ENCODE measurements at regions of chr17 and their contacts with region 1.

Region 1: GRCh38 chr17:29148790-29149430 is 31.3 kb downstream of the MYO18A start:
- DNase-seq: peak; percentile 79
- ATAC-seq: peak; percentile 90
- H3K4me3 ChIP-seq: peak overlapping the region; percentile 59
- H3K27ac ChIP-seq: peak overlapping the region; percentile 73
- H3K4me1 ChIP-seq: peaks cover 31% of the 10 kb centered on the region
- H3K27me3 ChIP-seq: no peaks in the 10 kb centered on the region
- CTCF ChIP-seq: peak; percentile 91 to 98 (median 97)
- EP300 ChIP-seq: no peak
- POLR2A ChIP-seq: peak; percentile 88
- RAD21 ChIP-seq: peak; percentile 88

Region 2: GRCh38 chr17:28878981-28879380 is 269.9 kb before region 1 on chr17:
- CTCF ChIA-PET with region 1: no interaction called
- POLR2A ChIA-PET with region 1: no interaction called
- RAD21 ChIA-PET with region 1: no interaction called
- SMC1A ChIA-PET with region 1: no interaction called
- in situ Hi-C with region 1: no loop called
- intact Hi-C with region 1: no loop called
- DNase-seq: no peak
- ATAC-seq: peak; percentile 92
- H3K4me3 ChIP-seq: no peak overlapping the region
- H3K27ac ChIP-seq: no peak overlapping the region
- H3K4me1 ChIP-seq: no peaks in the 10 kb centered on the region; the same call in 1 of the 2 replicates
- H3K27me3 ChIP-seq: no peaks in the 10 kb centered on the region
- CTCF ChIP-seq: peak; percentile 52 to 67 (median 55); a peak in 5 of 6 replicates
- EP300 ChIP-seq: no peak
- POLR2A ChIP-seq: no peak
- RAD21 ChIP-seq: peak; percentile 77

Region 3: DNA sequence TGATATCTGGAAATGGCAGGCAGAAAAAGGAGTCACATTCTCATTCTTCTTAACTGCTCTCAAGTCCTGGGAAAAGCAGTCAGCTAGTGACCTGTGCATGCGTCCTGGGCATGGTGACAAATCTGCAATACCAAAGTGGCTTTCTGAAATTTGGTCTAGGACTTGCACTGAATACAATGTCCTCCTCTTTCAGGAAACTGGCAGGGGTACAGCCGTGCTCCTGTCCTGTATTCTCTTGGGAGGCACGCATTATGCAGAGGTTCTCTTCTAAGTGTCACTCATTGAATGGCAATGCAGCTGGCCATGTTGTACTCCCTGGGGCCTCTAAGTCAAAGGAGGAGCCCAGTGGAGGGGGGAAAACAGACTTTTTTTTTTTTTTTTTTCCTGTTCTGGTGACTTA is 208.2 kb before region 1 on chr17:
- CTCF ChIA-PET with region 1: no interaction called
- POLR2A ChIA-PET with region 1: no interaction called
- RAD21 ChIA-PET with region 1: no interaction called
- SMC1A ChIA-PET with region 1: no interaction called
- in situ Hi-C with region 1: no loop called
- intact Hi-C with region 1: no loop called
- DNase-seq: no peak
- ATAC-seq: no peak
- H3K4me3 ChIP-seq: no peak overlapping the region
- H3K27ac ChIP-seq: no peak overlapping the region
- H3K4me1 ChIP-seq: peaks cover 13% of the 10 kb centered on the region
- H3K27me3 ChIP-seq: no peaks in the 10 kb centered on the region
- CTCF ChIP-seq: no peak
- EP300 ChIP-seq: no peak
- POLR2A ChIP-seq: no peak
- RAD21 ChIP-seq: no peak

Region 4: DNA sequence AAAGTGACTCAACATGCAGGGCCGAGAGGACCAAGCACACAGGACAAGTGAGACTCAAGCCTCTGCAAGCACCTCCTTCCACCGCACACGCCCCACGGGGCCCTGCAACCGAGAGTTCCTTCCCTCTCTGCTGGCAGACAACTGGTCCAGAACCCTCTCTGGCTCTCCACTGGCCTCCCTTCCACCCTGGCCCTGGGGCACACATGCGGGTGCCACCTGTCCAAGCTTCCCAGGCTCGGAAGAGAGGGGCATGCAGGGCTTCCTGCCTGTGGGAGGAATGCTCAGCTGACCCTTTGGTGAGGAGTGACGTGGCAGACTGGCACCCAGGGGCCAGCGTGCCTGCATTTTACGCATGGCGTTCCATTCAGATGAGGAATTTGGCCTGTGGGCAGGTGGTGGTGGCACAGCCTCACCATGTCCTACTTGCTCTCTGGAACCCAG is 46.1 kb before region 1 on chr17:
- CTCF ChIA-PET with region 1: no interaction called
- POLR2A ChIA-PET with region 1: no interaction called
- RAD21 ChIA-PET with region 1: no interaction called
- SMC1A ChIA-PET with region 1: no interaction called
- in situ Hi-C with region 1: no loop called
- intact Hi-C with region 1: no loop called
- DNase-seq: no peak
- ATAC-seq: no peak
- H3K4me3 ChIP-seq: no peak overlapping the region
- H3K27ac ChIP-seq: no peak overlapping the region
- H3K4me1 ChIP-seq: no peaks in the 10 kb centered on the region
- H3K27me3 ChIP-seq: no peaks in the 10 kb centered on the region
- CTCF ChIP-seq: no peak
- EP300 ChIP-seq: no peak
- POLR2A ChIP-seq: no peak
- RAD21 ChIP-seq: no peak

Region 5: GRCh38 chr17:29116804-29117772 is 31.8 kb before region 1 on chr17:
- CTCF ChIA-PET with region 1: interaction called, 371 read pairs
- POLR2A ChIA-PET with region 1: no interaction called
- RAD21 ChIA-PET with region 1: interaction called, 7 read pairs
- SMC1A ChIA-PET with region 1: interaction called, 4 read pairs
- in situ Hi-C with region 1: no loop called
- intact Hi-C with region 1: no loop called
- DNase-seq: peak; percentile 5
- ATAC-seq: peak; percentile 89
- H3K4me3 ChIP-seq: no peak overlapping the region
- H3K27ac ChIP-seq: no peak overlapping the region
- H3K4me1 ChIP-seq: no peaks in the 10 kb centered on the region
- H3K27me3 ChIP-seq: no peaks in the 10 kb centered on the region
- CTCF ChIP-seq: peak; percentile 90 to 95 (median 92)
- EP300 ChIP-seq: no peak
- POLR2A ChIP-seq: no peak
- RAD21 ChIP-seq: peak; percentile 70

Region 6: DNA sequence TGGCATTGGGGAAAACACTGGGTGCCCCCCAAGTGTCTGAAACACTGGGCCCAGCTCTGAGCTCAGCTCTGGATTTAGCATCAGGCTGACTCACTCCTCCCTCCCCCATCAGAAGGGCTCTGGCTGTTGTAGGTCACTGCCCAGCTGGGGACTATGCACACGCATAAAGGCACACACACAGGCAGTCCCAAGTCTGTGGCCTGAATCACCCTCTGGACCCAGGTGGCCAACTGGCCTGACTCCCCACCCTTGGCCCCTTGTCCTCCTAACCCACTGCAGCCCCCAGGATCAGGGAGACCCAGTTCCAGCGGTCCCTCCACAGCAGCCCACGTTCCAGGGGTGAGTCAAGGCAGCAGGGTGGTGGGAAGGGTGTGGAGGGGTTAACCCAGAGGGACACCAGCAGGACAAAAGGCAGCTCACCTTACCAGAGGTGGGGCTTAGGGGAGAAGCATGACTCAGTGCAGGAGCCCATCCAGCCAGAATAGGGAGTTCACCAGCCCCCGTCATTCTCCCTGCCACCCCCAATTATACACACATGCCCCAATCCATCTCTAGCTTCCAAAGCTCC is 15.7 kb before region 1 on chr17:
- CTCF ChIA-PET with region 1: interaction called, 371 read pairs
- POLR2A ChIA-PET with region 1: interaction called, 3 read pairs
- RAD21 ChIA-PET with region 1: interaction called, 49 read pairs
- SMC1A ChIA-PET with region 1: interaction called, 42 read pairs
- in situ Hi-C with region 1: no loop called
- intact Hi-C with region 1: no loop called
- DNase-seq: no peak
- ATAC-seq: peak; percentile 35; the same call in 1 of the 3 replicates
- H3K4me3 ChIP-seq: no peak overlapping the region
- H3K27ac ChIP-seq: no peak overlapping the region
- H3K4me1 ChIP-seq: peaks cover 7% of the 10 kb centered on the region
- H3K27me3 ChIP-seq: no peaks in the 10 kb centered on the region
- CTCF ChIP-seq: no peak
- EP300 ChIP-seq: no peak
- POLR2A ChIP-seq: no peak
- RAD21 ChIP-seq: no peak

Region 7: DNA sequence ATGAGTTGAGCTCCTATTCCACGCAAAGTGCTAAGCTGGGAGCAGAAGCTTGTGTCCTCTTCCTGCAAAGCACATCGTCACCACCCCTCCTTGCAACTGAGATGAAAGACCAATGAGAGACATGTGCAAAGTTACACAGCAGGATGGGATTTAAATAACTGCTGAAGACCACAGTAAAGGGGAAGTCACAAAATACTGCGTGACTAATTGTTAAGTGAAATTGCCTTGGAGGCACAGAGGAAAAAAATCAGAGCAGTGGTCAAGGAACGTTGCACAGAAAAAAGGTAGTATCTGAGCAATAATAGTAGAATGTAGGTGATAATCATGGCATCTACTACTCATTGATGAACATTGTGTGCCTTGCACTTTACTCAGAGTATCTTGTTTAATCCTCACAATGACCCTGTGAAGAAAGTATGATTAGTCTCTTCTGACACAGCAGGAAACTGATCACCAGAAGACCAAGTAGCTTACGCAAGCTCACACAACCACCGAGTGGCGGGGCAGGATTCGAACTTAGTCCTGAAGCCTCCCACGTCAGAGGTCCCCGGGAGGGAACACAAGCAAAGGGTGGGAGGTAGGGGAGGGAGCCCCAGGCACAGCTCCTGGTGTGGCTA is 46.7 kb after region 1 on chr17:
- CTCF ChIA-PET with region 1: interaction called, 14 read pairs
- POLR2A ChIA-PET with region 1: interaction called, 6 read pairs
- RAD21 ChIA-PET with region 1: interaction called, 3 read pairs
- SMC1A ChIA-PET with region 1: interaction called, 6 read pairs
- in situ Hi-C with region 1: no loop called
- intact Hi-C with region 1: no loop called
- DNase-seq: no peak
- ATAC-seq: peak; percentile 88
- H3K4me3 ChIP-seq: 0 out of 2 replicates have a peak overlapping the region, but pooled peaks have one; percentile 5
- H3K27ac ChIP-seq: peak overlapping the region; percentile 15; the same call in 1 of the 2 replicates
- H3K4me1 ChIP-seq: peaks cover 15% of the 10 kb centered on the region
- H3K27me3 ChIP-seq: no peaks in the 10 kb centered on the region
- CTCF ChIP-seq: no peak
- EP300 ChIP-seq: no peak; a peak in 1 of 4 replicates
- POLR2A ChIP-seq: no peak
- RAD21 ChIP-seq: no peak

Region 8: GRCh38 chr17:29241015-29241963 is 92.4 kb after region 1 on chr17:
- CTCF ChIA-PET with region 1: interaction called, 21 read pairs
- POLR2A ChIA-PET with region 1: no interaction called
- RAD21 ChIA-PET with region 1: interaction called, 14 read pairs
- SMC1A ChIA-PET with region 1: interaction called, 7 read pairs
- in situ Hi-C with region 1: no loop called
- intact Hi-C with region 1: no loop called
- DNase-seq: no peak
- ATAC-seq: no peak; the same call in 2 of the 3 replicates
- H3K4me3 ChIP-seq: no peak overlapping the region
- H3K27ac ChIP-seq: no peak overlapping the region
- H3K4me1 ChIP-seq: no peaks in the 10 kb centered on the region; the same call in 1 of the 2 replicates
- H3K27me3 ChIP-seq: no peaks in the 10 kb centered on the region
- CTCF ChIP-seq: 0 out of 6 replicates have a peak, but pooled peaks of 1 of the 3 experiments have one; percentile 16
- EP300 ChIP-seq: no peak
- POLR2A ChIP-seq: no peak
- RAD21 ChIP-seq: peak; percentile 39

Region 9: DNA sequence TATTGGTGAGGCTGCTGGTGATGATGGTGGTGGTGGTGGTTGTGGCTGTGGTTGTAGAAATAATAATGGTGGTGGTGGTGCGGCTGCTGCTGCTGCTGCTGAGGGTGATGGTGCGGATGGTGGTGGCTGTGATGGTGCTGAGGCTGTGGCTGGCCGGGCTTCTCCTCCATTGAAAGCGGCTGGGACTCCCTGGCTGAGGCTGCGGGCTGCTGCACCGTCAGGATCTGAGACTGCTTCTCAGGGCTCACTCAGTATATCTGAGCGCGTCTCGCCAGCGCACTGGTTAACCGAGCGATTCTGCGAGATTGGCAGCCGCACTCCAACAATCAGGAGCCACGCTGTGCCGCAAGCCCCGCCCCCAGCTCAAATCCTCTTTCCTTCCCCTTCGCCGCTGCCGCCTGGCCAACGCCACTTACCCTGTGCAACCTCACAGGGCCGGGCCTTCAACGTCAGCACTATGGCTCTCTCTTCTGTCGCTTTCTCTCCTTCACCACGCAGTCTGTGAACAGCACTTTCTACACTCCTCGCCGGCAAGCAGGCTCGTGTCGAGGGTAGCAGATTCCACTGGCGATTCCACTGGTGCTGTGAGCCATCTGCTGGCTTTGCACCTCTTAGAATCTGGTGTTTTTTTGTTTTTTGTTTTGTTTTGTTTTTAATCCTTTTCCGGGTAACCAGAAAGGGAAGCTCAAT is 145.1 kb after region 1 on chr17 and contains the start of gene NUFIP2:
- CTCF ChIA-PET with region 1: interaction called, 93 read pairs
- POLR2A ChIA-PET with region 1: interaction called, 13 read pairs
- RAD21 ChIA-PET with region 1: interaction called, 71 read pairs
- SMC1A ChIA-PET with region 1: interaction called, 58 read pairs
- in situ Hi-C with region 1: no loop called
- intact Hi-C with region 1: loop called (anchors 2 kb)
- DNase-seq: peak; percentile 95
- ATAC-seq: peak; percentile 94
- H3K4me3 ChIP-seq: peak within 1 kb of the TSS; percentile 89
- H3K27ac ChIP-seq: peak within 1 kb of the TSS; percentile 97
- H3K4me1 ChIP-seq: peaks cover 2% of the 10 kb centered on the region; the same call in 1 of the 2 replicates
- H3K27me3 ChIP-seq: no peaks in the 10 kb centered on the region
- CTCF ChIP-seq: no peak
- EP300 ChIP-seq: peak in 1 of 2 experiments; percentile 86; a peak in 2 of 4 replicates
- POLR2A ChIP-seq: peak; percentile 98
- RAD21 ChIP-seq: peak; percentile 3; the same call in 1 of the 2 replicates
- polyA plus RNA-seq, gene NUFIP2: 4.3 to 5.2 TPM

Measured in GM12878 (cell line).